Activated CD4-positive, alpha-beta T cell treated with anti-CD3 and anti-CD28 coated beads for 36 hours (primary cell): ENCODE measurements at regions of chr9 and their contacts with region 1.

Region 1: DNA sequence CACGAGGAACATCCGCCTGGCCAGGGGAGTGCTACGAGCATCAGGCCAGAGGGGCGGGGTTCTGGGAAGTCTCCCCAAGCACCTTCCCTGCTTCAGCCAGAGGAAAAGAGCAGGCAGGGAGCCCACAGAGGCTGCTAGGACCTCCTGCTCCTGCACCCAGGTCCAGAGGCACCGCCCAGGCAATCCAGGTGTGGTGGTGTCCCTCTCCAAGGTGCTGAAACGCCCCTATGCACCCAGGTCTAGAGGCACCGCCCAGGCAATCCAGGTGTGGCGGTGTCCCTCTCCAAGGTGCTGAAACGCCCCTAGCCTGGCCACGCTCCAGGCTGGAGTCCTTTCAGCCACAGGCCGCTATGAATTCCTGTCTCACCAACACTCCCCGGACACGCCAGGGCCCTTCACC is 10.7 kb upstream of the UBAC1 start:
- DNase-seq: peak; percentile 73
- ATAC-seq: peak; percentile 28
- H3K4me3 Mint-ChIP-seq: no peak overlapping the region
- H3K27ac Mint-ChIP-seq: no peak overlapping the region
- H3K4me1 Mint-ChIP-seq: peaks cover 5% of the 10 kb centered on the region
- H3K27me3 Mint-ChIP-seq: no peaks in the 10 kb centered on the region

Region 2: DNA sequence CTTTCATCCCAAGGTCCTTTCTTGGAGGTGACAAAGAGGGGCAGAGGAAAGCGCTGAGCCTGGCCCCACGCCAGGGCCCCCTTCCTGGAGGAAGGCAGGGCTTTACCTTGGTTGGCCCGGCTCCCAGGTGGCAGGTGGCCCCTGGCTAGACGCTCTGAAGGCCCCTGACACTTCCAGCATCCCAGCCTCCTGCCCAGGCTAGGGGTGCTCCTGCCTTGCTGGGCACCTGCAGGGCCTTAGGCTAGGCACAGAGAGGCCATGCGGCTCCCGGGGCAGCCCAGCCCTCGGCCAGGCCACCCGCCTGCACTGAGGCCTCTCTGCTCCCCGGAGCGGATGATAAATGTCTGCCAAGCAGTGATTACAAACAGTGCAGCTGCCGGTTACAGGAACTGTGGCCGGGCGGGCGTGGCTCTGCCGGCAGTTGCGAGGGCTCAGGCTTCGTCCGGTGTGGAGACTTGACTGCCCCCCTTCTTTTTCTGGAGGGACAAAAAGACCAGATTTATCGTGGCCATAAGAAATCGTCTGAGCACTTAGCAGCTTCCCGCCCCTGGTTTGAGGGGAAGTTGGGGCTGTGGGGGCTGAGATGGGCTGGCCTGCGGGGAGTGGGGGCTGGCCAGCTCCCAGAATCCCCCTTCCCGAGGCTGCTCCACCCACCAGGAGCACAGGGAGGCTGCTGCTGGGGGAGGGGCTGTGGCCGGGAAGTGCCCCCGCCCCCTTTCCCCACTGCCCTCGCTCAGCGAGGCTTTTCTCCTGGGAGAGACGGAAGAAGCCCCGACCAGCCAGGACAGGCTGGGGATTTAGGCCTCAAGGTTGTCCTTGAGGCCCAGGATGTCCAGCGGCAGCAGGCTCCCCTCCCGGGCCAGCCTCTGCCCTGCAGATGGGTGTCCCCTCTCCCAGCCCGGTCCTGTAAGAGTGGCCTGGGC is 20.9 kb after region 1 on chr9:
- CTCF ChIA-PET with region 1: interaction called, 10 read pairs
- POLR2A ChIA-PET with region 1: interaction called, 4 read pairs
- intact Hi-C with region 1: no loop called
- DNase-seq: peak; percentile 68
- ATAC-seq: peak; percentile 71
- H3K4me3 Mint-ChIP-seq: no peak overlapping the region
- H3K27ac Mint-ChIP-seq: no peak overlapping the region
- H3K4me1 Mint-ChIP-seq: peaks cover 17% of the 10 kb centered on the region
- H3K27me3 Mint-ChIP-seq: no peaks in the 10 kb centered on the region

Region 3: GRCh38 chr9:136002881-136003280 is 31.0 kb after region 1 on chr9:
- CTCF ChIA-PET with region 1: no interaction called
- POLR2A ChIA-PET with region 1: no interaction called
- intact Hi-C with region 1: no loop called
- DNase-seq: no peak
- ATAC-seq: no peak
- H3K4me3 Mint-ChIP-seq: no peak overlapping the region
- H3K27ac Mint-ChIP-seq: no peak overlapping the region
- H3K4me1 Mint-ChIP-seq: no peaks in the 10 kb centered on the region
- H3K27me3 Mint-ChIP-seq: no peaks in the 10 kb centered on the region